ENCODE measurements at regions of chr10 and their contacts with region 1.

Region 1: DNA sequence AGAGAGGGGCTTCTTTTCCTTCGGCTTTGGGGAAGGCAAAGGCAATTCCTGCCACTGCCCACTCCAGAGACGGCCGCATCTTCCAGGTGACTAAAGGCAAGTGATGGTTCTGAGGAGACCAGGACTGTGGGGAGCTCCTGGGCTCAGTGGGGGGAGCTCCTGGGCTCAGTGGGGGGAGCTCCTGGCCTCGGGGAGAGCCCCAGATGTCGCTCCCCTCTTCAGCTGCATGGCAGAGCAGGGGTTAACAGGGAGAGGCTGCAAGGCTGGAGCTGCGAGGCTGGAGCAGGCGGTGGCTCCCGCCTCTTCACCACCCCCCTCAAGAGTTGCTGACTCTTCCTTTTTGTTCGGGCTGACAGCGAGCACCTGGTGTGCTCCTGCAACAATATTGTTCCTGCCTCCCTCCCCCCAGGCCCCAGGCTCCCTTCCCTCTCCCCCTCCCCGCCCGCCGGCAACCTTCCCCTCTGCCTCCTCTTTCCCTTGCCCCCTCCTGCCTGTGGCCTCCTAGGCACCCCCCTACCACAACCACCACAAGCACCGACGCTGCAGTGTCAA is 56.3 kb upstream of the LBX1 start:
- DNase-seq: peak; percentile 71
- ATAC-seq: peak; percentile 68
- H3K4me3 Mint-ChIP-seq: peak overlapping the region; percentile 63
- H3K27ac Mint-ChIP-seq: no peak overlapping the region
- H3K4me1 Mint-ChIP-seq: peaks cover 74% of the 10 kb centered on the region
- H3K27me3 Mint-ChIP-seq: peaks cover 89% of the 10 kb centered on the region
- CTCF ChIP-seq: no peak

Region 2: DNA sequence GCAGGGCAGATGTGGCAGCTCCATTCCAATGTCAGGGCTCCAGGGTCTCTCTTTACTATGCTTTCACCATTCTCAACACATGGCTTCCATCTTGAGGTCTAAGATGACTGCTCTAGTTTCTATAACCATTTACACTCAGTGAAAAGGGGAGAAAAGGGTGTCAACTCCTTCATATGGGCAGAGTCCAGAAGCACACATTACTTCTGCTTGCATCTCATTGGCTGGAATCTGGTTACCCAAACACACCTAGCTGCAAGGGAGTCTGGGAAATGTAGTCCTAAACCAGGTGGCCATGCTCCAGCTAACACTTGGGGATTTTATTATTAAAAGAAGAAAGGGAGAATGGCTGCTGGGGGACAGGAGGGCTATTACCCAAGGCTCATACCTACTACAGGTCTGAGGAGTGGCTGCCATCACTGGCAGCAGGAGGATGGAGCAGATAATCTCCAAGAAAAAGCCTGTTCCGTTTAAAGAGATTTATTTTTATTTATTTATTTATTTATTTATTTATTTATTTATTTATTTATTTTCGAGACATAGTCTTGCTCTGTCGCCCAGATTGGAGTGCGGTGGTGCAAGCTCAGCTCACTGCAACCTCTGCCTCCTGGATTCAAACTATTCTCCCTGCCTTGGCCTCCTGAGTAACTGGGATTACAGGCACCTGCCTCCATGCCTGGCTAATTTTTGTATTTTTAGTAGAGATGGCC is 27.3 kb before region 1 on chr10:
- CTCF ChIA-PET with region 1: interaction called, 101 read pairs
- POLR2A ChIA-PET with region 1: no interaction called
- DNase-seq: no peak
- ATAC-seq: peak; percentile 64
- H3K4me3 Mint-ChIP-seq: no peak overlapping the region
- H3K27ac Mint-ChIP-seq: no peak overlapping the region
- H3K4me1 Mint-ChIP-seq: peaks cover 41% of the 10 kb centered on the region
- H3K27me3 Mint-ChIP-seq: peaks cover 25% of the 10 kb centered on the region
- CTCF ChIP-seq: no peak

Region 3: DNA sequence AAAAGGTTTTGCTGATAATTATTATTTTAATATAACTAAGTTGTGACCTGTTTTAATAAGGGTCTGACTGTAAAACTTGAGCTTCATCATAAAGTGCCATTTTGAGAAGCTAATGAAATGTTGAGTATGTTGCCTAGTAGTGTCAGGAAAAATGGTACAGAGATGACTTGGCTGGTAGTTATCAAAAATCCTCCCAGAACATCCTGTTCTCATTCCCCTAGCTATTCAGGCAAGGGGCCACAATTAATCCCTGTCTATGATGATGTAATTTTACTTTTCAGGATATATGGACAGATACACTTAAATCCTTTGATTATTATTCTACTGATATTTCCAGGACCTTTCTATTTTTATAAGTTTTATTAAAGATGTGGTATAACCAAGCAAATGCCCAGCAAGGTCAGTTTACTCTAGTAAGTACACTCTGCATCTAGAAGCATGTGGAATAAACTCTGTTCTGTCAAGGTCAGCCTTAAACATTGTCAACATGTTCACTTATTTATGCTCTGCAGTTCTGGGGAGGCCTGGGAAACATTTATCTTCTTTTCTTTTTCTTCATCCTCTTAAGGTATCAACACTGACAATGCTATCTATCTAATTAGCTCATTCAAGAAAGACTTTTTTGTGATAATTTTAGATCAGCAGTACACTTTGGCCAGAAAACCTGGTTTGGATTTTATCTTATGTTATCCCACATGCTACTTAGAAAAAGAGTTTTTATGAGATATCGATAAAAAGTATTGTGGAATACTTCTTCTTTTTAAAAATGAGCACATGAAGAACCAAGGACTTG is 100.5 kb after region 1 on chr10:
- CTCF ChIA-PET with region 1: no interaction called
- POLR2A ChIA-PET with region 1: no interaction called
- DNase-seq: no peak
- ATAC-seq: no peak
- H3K4me3 Mint-ChIP-seq: no peak overlapping the region
- H3K27ac Mint-ChIP-seq: no peak overlapping the region
- H3K4me1 Mint-ChIP-seq: no peaks in the 10 kb centered on the region
- H3K27me3 Mint-ChIP-seq: no peaks in the 10 kb centered on the region
- CTCF ChIP-seq: no peak